Activated CD4-positive, alpha-beta T cell treated with anti-CD3 and anti-CD28 coated beads, Interleukin-2, amount 10 ng/mL, durations not matched to agents 24 days and 14 days (primary cell): ENCODE measurements at regions of chr10 and their contacts with region 1.

Region 1: GRCh38 chr10:132458593-132459300 is 61.7 kb downstream of the PWWP2B start:
- DNase-seq: peak; percentile 92
- H3K4me3 Mint-ChIP-seq: no peak overlapping the region
- H3K27ac Mint-ChIP-seq: no peak overlapping the region
- H3K4me1 Mint-ChIP-seq: no peaks in the 10 kb centered on the region
- H3K27me3 Mint-ChIP-seq: peaks cover 1% of the 10 kb centered on the region

Region 2: GRCh38 chr10:132163278-132163765 is 295.4 kb before region 1 on chr10:
- intact Hi-C with region 1: no loop called
- DNase-seq: peak; percentile 90
- H3K4me3 Mint-ChIP-seq: no peak overlapping the region
- H3K27ac Mint-ChIP-seq: peak overlapping the region; percentile 53
- H3K4me1 Mint-ChIP-seq: peaks cover 35% of the 10 kb centered on the region
- H3K27me3 Mint-ChIP-seq: no peaks in the 10 kb centered on the region

Region 3: DNA sequence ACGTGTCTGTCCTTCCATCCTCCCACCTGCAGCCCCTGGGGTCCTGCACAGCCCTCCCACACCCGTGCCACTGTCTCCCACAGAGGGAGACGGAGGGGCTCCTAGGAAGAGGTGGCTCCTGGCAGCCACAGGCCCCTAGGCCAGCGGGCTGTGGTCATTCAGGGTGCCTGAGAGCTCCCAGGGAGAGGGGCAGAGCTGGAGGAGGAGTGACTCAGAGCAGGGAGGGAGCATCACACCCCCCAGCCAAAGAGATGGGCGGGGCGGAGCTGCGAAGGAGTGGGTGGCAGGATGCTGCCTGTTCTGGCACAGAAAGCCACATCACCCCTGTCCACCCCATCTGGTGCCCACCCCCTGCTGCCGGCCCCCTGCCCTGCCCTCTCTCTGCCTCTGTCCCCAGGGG is 201.5 kb before region 1 on chr10:
- intact Hi-C with region 1: no loop called
- DNase-seq: no peak
- H3K4me3 Mint-ChIP-seq: no peak overlapping the region
- H3K27ac Mint-ChIP-seq: no peak overlapping the region
- H3K4me1 Mint-ChIP-seq: no peaks in the 10 kb centered on the region
- H3K27me3 Mint-ChIP-seq: peaks cover under 1% of the 10 kb centered on the region

Region 4: GRCh38 chr10:132536971-132537712 is 78.4 kb after region 1 on chr10:
- intact Hi-C with region 1: no loop called
- DNase-seq: peak; percentile 100
- H3K4me3 Mint-ChIP-seq: peak overlapping the region; percentile 73
- H3K27ac Mint-ChIP-seq: no peak overlapping the region
- H3K4me1 Mint-ChIP-seq: peaks cover 44% of the 10 kb centered on the region
- H3K27me3 Mint-ChIP-seq: peaks cover 11% of the 10 kb centered on the region

Region 5: GRCh38 chr10:132637477-132638129 is 178.9 kb after region 1 on chr10:
- intact Hi-C with region 1: loop called (anchors 1 kb)
- DNase-seq: peak; percentile 76
- H3K4me3 Mint-ChIP-seq: no peak overlapping the region
- H3K27ac Mint-ChIP-seq: no peak overlapping the region
- H3K4me1 Mint-ChIP-seq: peaks cover 15% of the 10 kb centered on the region
- H3K27me3 Mint-ChIP-seq: peaks cover 2% of the 10 kb centered on the region